ENCODE measurements at regions of chr13 and their contacts with region 1.

Region 1: DNA sequence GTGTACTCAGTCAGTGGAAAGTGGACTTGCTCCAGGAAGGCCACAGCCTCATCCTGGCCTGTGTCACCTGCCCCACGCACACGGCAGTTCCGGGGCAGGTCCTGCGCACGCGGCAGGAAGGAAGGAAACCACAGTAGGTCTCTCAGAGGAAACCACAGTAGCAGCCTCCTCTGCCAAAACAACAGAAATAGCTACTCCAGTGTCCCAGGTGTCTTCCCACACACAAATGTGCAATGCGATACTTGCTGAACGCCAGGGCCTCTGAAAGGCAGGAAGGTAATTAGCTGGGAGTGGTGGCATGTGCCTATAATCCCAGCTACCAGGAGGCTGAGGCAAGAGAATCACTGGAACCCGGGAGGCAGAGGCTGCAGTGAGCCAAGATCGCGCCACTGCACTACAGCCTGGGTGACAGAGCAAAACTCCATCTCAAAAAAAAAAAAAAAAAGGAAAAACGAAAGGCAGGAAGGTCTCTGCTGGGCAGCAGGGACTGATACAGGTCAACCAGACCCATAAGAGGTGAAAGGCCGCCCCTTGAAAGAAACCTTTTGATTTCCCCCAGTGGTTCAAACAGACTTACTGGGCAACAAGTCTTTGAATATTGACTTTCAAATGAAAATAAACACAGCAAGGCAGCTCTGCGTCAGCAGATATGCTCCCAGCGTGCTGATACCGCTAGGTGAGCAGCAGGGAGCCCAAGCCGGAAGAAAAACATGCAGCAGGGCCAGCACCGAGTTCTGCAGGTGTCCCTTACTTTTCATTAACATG is 49.5 kb downstream of the CRYL1 start:
- DNase-seq: no peak
- ATAC-seq: no peak
- H3K4me3 ChIP-seq: no peak overlapping the region
- H3K27ac ChIP-seq: no peak overlapping the region
- H3K4me1 ChIP-seq: peaks cover 10% of the 10 kb centered on the region; the same call in 2 of the 3 replicates
- CTCF ChIP-seq: no peak
- EP300 ChIP-seq: no peak
- POLR2A ChIP-seq: no peak
- RAD21 ChIP-seq: no peak

Region 2: GRCh38 chr13:20197361-20197834 is 278.7 kb before region 1 on chr13:
- CTCF ChIA-PET with region 1: interaction called, 10 read pairs
- POLR2A ChIA-PET with region 1: no interaction called
- DNase-seq: peak; percentile 31
- ATAC-seq: peak in 1 of 2 experiments; percentile 51; a peak in 3 of 6 replicates
- H3K4me3 ChIP-seq: no peak overlapping the region
- H3K27ac ChIP-seq: no peak overlapping the region
- H3K4me1 ChIP-seq: peaks cover 11% of the 10 kb centered on the region; the same call in 2 of the 3 replicates
- CTCF ChIP-seq: peak; percentile 60
- EP300 ChIP-seq: no peak
- POLR2A ChIP-seq: no peak
- RAD21 ChIP-seq: peak; percentile 52 to 55; a peak in 4 of 5 replicates

Region 3: DNA sequence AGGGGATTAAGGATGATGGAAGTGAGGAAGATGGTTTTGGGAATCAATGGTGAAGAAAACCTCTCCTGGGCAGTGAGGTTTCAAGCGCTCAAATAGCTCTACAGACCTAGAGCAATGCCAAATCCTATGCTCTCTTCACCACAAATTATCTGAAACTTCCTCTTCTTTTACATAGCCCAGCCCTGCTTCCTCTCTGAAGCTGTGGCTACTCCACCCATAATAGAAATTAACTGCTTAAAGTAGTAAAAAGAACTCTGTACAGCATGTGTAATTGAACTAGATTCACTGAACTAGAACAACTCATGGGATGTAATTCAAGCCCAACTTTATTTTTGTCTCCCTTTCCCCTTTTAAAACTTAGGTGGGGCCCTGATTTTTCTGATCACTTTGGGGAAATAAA is 70.4 kb after region 1 on chr13:
- CTCF ChIA-PET with region 1: no interaction called
- POLR2A ChIA-PET with region 1: no interaction called
- DNase-seq: no peak
- ATAC-seq: no peak
- H3K4me3 ChIP-seq: no peak overlapping the region
- H3K27ac ChIP-seq: no peak overlapping the region
- H3K4me1 ChIP-seq: peaks cover 11% of the 10 kb centered on the region; the same call in 2 of the 3 replicates
- CTCF ChIP-seq: no peak
- EP300 ChIP-seq: no peak
- POLR2A ChIP-seq: no peak
- RAD21 ChIP-seq: no peak